ENCODE measurements at regions of chr2 and their contacts with region 1.

Region 1: DNA sequence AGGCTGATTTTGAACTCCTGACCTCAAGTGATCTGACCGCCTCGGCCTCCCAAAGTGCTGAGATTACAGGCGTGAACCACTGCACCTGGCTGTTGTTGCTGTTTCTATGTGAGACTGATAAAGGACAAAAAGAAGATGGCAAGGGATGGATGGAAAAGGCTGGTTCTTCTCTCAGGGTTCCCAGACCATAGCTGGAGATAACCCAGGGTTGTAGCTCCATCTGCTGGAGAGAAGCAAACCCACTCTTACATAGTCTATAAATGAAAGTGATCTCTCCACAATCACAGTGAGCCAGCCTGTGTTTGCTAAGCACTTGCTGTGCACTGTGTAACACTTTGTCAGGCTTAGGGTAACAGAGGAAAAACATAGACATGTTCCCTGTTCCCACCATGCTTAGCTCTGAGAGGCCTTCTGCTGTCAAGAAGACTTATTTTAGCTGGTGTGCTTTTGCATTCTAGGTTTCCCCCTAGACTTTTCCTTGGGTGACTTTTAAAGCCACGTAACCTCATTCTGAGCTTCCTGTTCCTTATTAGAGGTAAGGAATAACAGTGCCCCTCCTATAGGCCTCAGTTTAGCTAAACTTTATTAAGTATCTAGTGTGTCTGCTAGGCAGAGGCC is 49.7 kb downstream of the LIMS1 start:
- DNase-seq: peak in 1 of 2 donors; percentile 82
- H3K4me3 ChIP-seq: no peak overlapping the region
- H3K27ac ChIP-seq: peak overlapping the region; percentile 15 to 31
- H3K4me1 ChIP-seq: peaks cover 5 to 34% of the 10 kb centered on the region in 2 donors
- H3K27me3 ChIP-seq: no peaks in the 10 kb centered on the region
- CTCF ChIP-seq: peak; percentile 72 to 75 (median 72)

Region 2: DNA sequence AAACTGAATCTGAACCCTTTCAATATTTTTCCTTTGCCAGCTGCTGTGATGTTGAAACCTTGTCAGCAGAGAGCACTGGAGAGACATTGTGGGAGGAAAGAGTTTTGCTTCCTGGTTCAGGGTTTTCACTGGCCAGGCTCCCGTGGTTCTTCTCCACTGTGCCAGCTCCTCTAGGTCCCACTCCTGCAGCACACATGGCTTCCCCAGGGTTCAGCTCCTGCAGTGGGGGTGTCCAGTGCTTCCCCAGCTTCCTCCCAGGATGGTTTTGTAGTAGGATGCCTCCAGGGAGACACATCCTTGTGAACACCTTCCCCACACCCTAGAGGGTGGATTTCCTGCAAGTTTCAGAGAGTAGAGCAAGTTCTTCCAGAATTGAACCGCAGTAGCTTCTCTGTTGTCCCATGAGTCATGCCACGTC is 368.2 kb before region 1 on chr2:
- intact Hi-C with region 1: loop called (anchors 5 kb)
- DNase-seq: no peak
- H3K4me3 ChIP-seq: no peak overlapping the region
- H3K27ac ChIP-seq: no peak overlapping the region
- H3K4me1 ChIP-seq: peaks cover 0 to 2% of the 10 kb centered on the region in 2 donors
- H3K27me3 ChIP-seq: no peaks in the 10 kb centered on the region
- CTCF ChIP-seq: peak in 2 of 3 experiments; percentile 13 to 35

Region 3: DNA sequence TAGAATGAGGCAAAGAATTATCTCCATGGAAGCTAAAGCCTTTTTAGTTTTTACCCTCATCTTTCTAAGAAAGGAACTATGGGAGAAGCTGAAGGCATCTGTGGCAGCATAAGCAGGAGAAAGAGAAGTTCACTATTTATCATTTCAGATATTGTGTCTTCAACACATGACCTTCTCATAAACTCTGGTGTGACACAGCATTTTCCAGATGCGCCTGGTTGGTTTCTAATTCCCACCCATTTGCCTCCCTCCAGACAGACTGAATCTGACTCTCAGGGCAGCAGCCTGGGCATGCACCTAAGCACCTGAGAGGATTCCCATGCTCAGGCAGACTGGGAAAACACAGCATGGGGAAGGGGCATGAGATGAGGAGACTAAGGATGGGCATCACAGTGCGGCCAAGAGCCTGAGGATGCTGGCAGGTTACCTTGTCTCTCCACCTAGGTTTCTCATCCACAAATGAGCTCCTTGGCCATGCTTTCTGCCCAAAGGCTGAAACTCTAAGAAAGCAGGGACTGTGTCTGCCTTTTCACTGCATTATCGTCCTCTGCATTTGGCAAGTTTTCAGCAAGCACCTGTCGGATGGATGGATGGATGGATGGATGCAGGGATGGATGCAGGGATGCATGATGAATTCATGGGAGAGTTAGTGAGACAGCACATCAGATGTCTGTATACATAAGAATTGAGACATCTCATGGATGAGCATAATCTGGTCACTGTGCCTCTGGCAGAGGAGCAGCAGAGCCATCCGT is 235.0 kb before region 1 on chr2:
- intact Hi-C with region 1: loop called (anchors 5 kb)
- DNase-seq: no peak
- H3K4me3 ChIP-seq: no peak overlapping the region
- H3K27ac ChIP-seq: no peak overlapping the region
- H3K4me1 ChIP-seq: no peaks in the 10 kb centered on the region
- H3K27me3 ChIP-seq: no peaks in the 10 kb centered on the region
- CTCF ChIP-seq: no peak

Region 4: DNA sequence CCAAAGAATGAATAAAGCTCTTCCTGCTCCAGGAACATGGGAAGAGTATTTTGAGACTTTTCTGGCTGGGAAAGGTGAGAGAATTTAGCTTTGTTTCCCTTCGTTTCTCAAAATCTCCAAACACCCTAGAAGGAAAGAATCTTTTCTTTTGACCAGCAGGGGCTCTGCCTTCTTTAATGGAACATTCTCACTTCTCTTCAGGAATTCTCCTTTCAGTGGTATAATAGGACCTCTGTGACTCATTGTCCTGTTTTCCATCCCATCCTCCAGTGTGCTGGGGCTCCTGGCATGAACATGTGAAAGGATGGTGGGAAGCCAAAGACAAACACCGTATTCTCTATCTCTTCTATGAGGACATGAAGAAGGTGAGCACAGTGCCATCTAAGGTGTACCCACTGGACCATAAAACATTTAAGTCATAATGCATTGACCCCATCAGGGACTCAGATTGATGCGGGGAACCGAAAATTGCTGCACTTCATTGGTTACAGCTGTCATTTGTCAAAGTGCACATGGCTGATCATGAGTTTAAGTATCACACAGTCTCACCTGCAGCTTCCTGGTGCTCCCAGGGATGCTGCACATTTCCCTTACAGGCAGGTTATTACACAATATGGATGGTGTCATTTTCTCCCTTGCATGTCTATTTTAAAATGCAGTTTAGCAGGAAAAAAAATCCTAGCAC is 200.7 kb before region 1 on chr2:
- intact Hi-C with region 1: no loop called
- DNase-seq: no peak
- H3K4me3 ChIP-seq: no peak overlapping the region
- H3K27ac ChIP-seq: no peak overlapping the region
- H3K4me1 ChIP-seq: no peaks in the 10 kb centered on the region
- H3K27me3 ChIP-seq: no peaks in the 10 kb centered on the region
- CTCF ChIP-seq: no peak

Region 5: DNA sequence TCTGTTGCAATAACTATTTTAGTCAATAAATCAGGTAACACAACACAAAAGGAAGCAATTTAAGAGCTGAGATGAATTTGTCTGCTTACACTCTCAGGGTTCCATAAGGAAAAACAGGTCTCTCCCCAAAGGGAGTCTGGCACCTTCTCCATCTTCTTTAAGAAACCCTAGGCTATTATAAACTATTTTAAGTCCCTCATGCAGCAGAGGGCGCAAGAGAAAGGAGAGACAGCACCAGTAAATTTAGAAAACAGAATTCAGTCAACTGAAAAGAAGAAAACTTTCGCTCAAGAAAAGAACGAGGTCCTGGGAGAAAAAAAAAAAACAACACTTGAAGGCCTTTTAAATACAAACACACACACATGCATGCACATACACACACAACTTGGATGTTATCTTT is 187.2 kb before region 1 on chr2:
- intact Hi-C with region 1: loop called (anchors 10 kb)
- DNase-seq: no peak
- H3K4me3 ChIP-seq: no peak overlapping the region
- H3K27ac ChIP-seq: no peak overlapping the region
- H3K4me1 ChIP-seq: no peaks in the 10 kb centered on the region
- H3K27me3 ChIP-seq: no peaks in the 10 kb centered on the region
- CTCF ChIP-seq: no peak

Region 6: DNA sequence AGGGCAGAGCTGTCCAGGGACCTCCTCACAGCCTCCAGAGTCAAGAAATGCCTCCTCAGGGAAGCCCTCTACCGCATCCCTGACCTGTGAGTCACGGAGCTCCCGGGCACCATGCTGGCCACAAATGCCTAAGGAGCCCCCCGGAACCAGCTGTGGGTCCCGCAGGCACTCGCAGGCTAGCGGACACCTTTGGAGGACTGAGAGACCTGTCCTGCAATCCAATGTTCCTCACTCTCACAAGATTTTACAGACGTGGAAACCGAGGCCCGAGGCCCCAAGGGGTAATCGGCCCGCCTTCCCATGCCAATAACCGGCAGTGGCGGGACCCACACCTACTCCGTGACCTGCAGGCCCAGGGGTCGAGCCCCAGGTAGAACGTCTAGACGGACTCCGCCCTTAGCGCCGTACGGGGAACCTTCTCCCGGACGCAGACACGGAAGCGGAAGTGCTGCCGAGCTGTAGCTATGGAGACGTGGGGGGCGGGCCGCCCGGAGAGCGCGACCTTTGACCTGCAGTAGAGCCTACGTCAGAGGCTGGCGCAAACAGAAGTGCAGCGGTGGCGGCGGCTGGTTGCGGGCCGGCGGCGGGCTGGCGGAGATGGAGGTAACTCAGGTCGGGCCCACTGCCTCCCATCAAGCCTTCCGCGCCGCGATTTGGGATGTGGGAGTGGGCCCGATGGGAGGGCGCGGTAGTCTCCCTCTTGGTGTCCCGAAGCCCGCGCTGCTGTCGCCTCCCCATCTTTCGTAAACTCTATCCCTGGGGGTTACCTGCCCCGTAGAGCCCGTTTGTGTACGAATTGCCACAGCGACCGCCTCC is 135.1 kb before region 1 on chr2 and contains the start of gene GCC2:
- intact Hi-C with region 1: loop called (anchors 2 kb)
- DNase-seq: peak; percentile 79 to 97
- H3K4me3 ChIP-seq: peak within 1 kb of the TSS; percentile 56 to 77
- H3K27ac ChIP-seq: peak within 1 kb of the TSS; percentile 79 to 88
- H3K4me1 ChIP-seq: peaks cover 0 to 3% of the 10 kb centered on the region in 2 donors
- H3K27me3 ChIP-seq: no peaks in the 10 kb centered on the region
- CTCF ChIP-seq: no peak
- total RNA-seq, gene GCC2: 7.6 TPM

Region 7: GRCh38 chr2:108533832-108534583 is 50.0 kb before region 1 on chr2 and contains the start of gene LIMS1:
- intact Hi-C with region 1: loop called (anchors 2 kb)
- DNase-seq: peak; percentile 73 to 95
- H3K4me3 ChIP-seq: peak within 1 kb of the TSS; percentile 84 to 88
- H3K27ac ChIP-seq: peak within 1 kb of the TSS; percentile 84 to 91
- H3K4me1 ChIP-seq: peaks cover 0 to 17% of the 10 kb centered on the region in 2 donors
- H3K27me3 ChIP-seq: no peaks in the 10 kb centered on the region
- CTCF ChIP-seq: no peak
- total RNA-seq, gene LIMS1: 39.8 TPM